WTC11 (cell line): ENCODE measurements at regions of chr10 and their contacts with region 1.

Region 1: GRCh38 chr10:119445311-119445934 is 97.1 kb downstream of the RGS10 start:
- DNase-seq: peak; percentile 92
- ATAC-seq: peak; percentile 82
- H3K4me3 Mint-ChIP-seq: no peak overlapping the region
- H3K27ac Mint-ChIP-seq: no peak overlapping the region
- H3K4me1 Mint-ChIP-seq: peaks cover 11% of the 10 kb centered on the region
- H3K27me3 Mint-ChIP-seq: no peaks in the 10 kb centered on the region; the same call in 1 of the 2 replicates
- CTCF ChIP-seq: peak; percentile 97

Region 2: DNA sequence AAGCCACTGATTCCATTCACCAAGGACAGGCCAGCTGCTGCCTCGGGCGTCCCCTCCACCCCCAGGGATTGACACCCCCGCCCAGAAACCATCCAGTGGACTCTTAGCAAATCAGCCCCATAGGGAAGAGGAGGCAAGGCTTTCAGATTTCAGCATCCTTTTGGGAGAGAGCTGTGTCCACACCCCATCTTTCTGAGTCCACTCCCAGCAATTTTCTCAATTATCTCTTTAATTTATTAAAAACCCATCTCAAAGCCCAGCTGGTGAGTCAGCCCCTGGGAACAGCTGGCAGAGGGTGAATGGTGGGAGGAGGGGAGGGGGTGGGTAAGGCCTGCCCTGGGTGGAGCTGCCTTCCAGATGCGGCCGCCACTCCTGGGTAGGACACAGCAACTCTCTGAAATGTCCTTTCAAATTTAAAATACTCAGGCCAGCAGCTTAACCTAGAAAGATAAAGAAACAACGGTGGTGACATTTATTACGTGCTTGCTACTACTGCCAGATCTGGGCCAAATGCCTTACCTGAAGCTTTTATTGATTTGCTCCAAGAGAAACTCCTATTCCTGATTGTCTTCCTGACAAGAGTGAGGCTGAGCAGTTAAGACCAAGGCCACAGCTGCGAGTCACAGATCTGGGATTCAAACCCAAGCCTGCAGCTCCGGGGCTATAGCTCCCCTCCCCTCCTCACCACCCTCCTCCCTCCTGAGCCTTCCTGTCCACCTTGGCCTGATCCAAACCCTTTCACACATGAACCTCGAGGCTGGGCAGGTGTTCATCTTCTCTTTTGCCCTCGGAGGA is 23.3 kb before region 1 on chr10:
- CTCF ChIA-PET with region 1: interaction called, 38 read pairs
- POLR2A ChIA-PET with region 1: no interaction called
- DNase-seq: no peak
- ATAC-seq: peak; percentile 65
- H3K4me3 Mint-ChIP-seq: no peak overlapping the region
- H3K27ac Mint-ChIP-seq: no peak overlapping the region
- H3K4me1 Mint-ChIP-seq: peaks cover 19% of the 10 kb centered on the region
- H3K27me3 Mint-ChIP-seq: no peaks in the 10 kb centered on the region
- CTCF ChIP-seq: no peak

Region 3: GRCh38 chr10:119457966-119458766 is 12.7 kb after region 1 on chr10:
- CTCF ChIA-PET with region 1: interaction called, 14 read pairs
- POLR2A ChIA-PET with region 1: no interaction called
- DNase-seq: no peak
- ATAC-seq: no peak; the same call in 1 of the 2 replicates
- H3K4me3 Mint-ChIP-seq: no peak overlapping the region
- H3K27ac Mint-ChIP-seq: no peak overlapping the region
- H3K4me1 Mint-ChIP-seq: peaks cover 7% of the 10 kb centered on the region; the same call in 1 of the 2 replicates
- H3K27me3 Mint-ChIP-seq: no peaks in the 10 kb centered on the region
- CTCF ChIP-seq: no peak

Region 4: GRCh38 chr10:119620241-119621077 is 175.0 kb after region 1 on chr10:
- CTCF ChIA-PET with region 1: no interaction called
- POLR2A ChIA-PET with region 1: no interaction called
- DNase-seq: no peak
- ATAC-seq: peak; percentile 54; the same call in 1 of the 2 replicates
- H3K4me3 Mint-ChIP-seq: no peak overlapping the region
- H3K27ac Mint-ChIP-seq: no peak overlapping the region
- H3K4me1 Mint-ChIP-seq: peaks cover 14% of the 10 kb centered on the region
- H3K27me3 Mint-ChIP-seq: no peaks in the 10 kb centered on the region; the same call in 1 of the 2 replicates
- CTCF ChIP-seq: no peak